SK-N-SH (cell line): ENCODE measurements at regions of chr6 and their contacts with region 1.

Region 1: GRCh38 chr6:125995972-125996580 is 9.7 kb downstream of the TRMT11 start:
- DNase-seq: peak; percentile 57
- H3K4me3 ChIP-seq: no peak overlapping the region; a peak in 1 of 4 replicates
- H3K27ac ChIP-seq: no peak overlapping the region
- H3K4me1 ChIP-seq: no peaks in the 10 kb centered on the region; a peak in 1 of 4 replicates
- H3K27me3 ChIP-seq: no peaks in the 10 kb centered on the region
- CTCF ChIP-seq: peak; percentile 99
- EP300 ChIP-seq: no peak
- RAD21 ChIP-seq: peak; percentile 94

Region 2: DNA sequence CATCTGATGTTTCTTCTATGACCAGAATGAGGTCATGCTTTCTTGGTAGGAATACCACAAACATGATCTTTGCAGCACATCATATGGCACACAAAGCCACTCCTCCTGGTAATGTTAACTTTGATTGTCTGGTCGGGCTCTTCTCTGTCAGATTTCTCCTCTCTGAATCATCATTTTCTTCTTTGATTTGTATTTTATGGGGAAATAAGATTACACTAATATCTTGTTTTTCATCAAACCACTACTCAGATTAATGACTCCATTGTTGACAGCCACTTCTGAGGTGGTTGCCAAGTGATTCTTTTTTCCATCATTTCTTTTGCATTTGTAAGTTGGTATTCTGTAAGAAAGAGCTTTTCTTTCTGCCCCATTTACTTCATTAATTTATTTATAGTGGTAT is 19.8 kb after region 1 on chr6:
- CTCF ChIA-PET with region 1: interaction called, 13 read pairs
- POLR2A ChIA-PET with region 1: no interaction called
- DNase-seq: no peak
- H3K4me3 ChIP-seq: no peak overlapping the region
- H3K27ac ChIP-seq: peak overlapping the region in 1 of 2 experiments; percentile 77; a peak in 2 of 4 replicates
- H3K4me1 ChIP-seq: peaks cover 0 to 8% of the 10 kb centered on the region in 2 experiments; a peak in 2 of 4 replicates
- H3K27me3 ChIP-seq: no peaks in the 10 kb centered on the region
- CTCF ChIP-seq: no peak
- EP300 ChIP-seq: peak; percentile 52 to 66; a peak in 3 of 4 replicates
- RAD21 ChIP-seq: no peak